Prostate gland (tissue), 2 donors: ENCODE measurements at regions of chr20 and their contacts with region 1.

Region 1: DNA sequence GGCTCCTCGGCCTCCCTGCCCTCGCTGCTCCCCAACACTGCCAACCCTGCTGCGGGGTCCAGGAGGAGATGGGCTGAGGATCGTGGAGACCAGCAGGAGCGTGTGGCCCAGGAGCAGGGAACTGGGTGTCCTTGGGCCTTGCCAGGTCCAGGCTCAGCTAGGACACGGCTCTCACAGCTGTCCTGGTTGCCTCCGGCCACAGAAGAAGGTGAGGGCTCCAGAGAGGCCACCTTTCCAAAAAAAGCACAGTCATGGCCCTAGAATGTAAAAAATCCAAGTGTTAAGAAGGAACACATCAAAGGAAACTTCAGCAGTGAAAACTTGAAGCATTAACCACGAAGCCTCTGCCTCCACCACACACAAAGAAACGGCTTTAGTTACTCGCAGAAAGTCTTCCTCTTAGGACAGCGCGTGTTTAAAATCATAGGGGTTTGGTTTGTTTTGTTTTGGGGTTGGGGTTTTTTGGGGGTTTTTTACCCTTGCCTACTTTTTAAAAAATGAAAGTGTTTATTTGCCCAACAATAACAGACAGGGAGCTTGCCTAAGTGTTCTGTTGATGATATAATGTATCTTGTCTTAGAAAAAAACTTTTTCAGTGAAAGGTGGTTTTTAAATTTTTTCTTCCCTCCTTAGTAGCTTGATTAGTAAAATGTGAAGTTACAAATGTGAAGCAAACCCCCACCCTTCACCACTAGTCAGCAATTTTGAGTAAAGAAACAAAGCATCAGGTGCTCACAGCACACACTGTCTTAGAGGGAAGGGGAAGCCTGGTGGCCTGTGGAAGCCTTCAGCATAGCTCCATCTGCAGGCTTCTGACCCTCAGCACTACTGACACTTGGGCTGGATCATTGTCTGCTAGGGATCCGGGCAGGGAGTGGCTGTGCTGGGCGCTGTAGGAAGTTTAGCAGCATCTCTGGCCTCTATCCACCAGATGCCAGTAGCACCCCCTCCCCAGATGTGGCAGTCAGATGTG is 60.0 kb downstream of the PTPN1 start:
- DNase-seq: no peak
- H3K4me3 ChIP-seq: no peak overlapping the region
- H3K27ac ChIP-seq: peak overlapping the region in 1 of 2 donors; percentile 21
- H3K4me1 ChIP-seq: no peaks in the 10 kb centered on the region
- H3K27me3 ChIP-seq: no peaks in the 10 kb centered on the region
- CTCF ChIP-seq: peak in 2 of 4 experiments; percentile 19 to 27
- POLR2A ChIP-seq: no peak

Region 2: DNA sequence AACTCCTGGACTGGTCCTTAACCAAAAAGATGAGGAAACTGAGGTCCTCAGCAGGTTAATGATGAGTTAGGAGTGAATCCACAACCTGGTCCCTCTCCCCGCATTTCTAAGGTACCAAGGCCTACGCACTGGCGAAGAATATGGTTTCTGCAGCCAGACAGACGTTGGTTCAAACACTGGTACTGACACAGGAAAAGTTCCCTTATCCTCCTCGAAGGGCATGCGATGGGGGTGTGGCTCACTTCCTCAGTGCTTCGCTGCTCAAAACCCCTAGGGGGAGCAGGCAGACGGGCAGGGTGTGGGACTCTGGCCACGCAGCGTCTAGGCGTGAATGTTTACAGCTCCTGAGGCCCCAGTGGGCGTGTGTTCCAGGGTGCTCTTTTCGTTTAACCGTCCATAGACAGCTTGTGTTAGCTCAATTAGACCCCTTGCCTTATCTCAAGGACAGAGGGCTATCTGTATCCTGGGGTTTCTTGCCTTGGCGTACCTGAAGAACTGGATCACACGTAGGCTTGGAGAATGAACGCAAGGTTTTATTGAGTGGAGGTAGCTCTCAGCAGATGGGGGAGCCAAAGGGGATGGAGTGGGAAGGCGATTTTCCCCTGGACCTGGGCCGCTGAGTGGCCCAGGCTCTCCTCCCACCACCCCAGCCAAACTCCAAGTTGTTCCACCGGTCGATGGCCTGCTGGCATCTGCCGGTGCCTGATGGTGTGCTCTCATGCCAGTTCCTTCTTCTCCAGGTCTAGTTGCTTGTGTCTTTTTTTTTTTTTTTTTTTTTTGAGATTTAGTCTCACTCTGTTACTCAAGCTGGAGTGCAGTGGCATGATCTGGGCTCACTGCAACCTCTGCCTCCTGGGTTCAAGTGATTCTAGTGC is 91.8 kb before region 1 on chr20:
- intact Hi-C with region 1: loop called (anchors 5 kb)
- DNase-seq: peak; percentile 36
- H3K4me3 ChIP-seq: no peak overlapping the region
- H3K27ac ChIP-seq: no peak overlapping the region
- H3K4me1 ChIP-seq: no peaks in the 10 kb centered on the region
- H3K27me3 ChIP-seq: no peaks in the 10 kb centered on the region
- CTCF ChIP-seq: peak in 3 of 4 experiments; percentile 34 to 72 (median 59)
- POLR2A ChIP-seq: no peak

Region 3: DNA sequence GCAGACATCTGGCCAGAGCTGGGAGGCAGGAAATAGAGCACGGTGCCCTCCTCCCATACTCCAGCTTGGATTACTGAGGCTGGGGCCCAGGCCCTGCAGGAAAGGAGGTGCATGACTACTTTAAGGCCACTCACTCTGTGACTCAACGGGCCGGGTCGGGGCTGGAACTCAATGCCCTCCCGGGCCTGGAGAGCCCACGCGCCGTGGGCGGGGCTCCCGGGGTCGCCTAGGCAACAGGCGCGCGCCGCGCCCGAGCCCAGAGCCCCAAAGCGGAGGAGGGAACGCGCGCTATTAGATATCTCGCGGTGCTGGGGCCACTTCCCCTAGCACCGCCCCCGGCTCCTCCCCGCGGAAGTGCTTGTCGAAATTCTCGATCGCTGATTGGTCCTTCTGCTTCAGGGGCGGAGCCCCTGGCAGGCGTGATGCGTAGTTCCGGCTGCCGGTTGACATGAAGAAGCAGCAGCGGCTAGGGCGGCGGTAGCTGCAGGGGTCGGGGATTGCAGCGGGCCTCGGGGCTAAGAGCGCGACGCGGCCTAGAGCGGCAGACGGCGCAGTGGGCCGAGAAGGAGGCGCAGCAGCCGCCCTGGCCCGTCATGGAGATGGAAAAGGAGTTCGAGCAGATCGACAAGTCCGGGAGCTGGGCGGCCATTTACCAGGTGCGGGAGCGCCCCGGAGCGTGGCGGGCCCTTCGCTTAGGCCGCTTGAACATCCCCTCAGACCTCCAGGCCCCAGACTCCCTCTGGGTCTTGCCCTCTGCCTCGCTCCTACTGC is 60.0 kb before region 1 on chr20 and contains the start of gene PTPN1:
- intact Hi-C with region 1: loop called (anchors 5 kb)
- DNase-seq: peak; percentile 98
- H3K4me3 ChIP-seq: peak within 1 kb of the TSS; percentile 86 to 100
- H3K27ac ChIP-seq: peak within 1 kb of the TSS; percentile 81 to 89
- H3K4me1 ChIP-seq: peaks cover 3% of the 10 kb centered on the region
- H3K27me3 ChIP-seq: no peaks in the 10 kb centered on the region
- CTCF ChIP-seq: peak in 1 of 4 experiments; percentile 29
- POLR2A ChIP-seq: peak; percentile 99
- total RNA-seq, gene PTPN1: 28.5 to 46.6 TPM